Activated CD4-positive, alpha-beta memory T cell treated with anti-CD3 and anti-CD28 coated beads for 36 hours (primary cell): ENCODE measurements at regions of chr19 and their contacts with region 1.

Region 1: DNA sequence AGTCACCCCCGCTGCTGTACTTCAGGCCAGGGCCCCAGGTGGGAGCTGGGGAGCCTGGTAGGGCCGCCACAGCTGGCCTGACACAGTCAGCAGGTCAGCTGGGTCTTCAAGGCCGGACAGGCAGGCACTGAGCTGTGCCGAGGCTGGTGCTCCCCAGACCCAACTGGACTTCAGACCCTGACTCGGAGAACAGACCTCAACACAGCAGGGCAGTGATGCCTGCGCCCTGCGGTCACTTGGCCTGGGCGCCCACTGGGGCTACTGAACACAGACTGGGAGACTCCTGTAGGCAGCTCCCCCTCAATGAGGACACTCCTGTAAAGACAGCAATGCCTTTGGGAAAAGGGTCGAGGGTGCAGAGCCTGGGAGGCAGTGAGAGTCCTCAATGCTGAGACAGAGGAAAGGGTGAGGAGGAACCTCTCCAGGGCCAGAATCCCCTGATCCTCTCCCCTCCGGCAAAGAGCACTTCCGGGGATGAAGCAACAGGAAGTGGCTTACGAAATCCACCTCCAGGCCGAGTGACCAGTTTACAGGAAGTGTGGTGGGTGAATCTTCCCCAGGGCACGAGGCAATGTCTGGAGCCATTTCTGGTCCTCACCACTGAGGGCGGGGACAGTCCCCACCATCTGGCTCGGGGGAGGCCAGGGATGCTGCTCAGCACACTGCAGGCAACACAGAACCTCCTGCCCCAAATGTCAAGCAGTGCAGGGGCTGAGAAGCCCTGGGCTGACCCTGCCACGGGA is 40.8 kb upstream of the ISYNA1 start:
- DNase-seq: peak; percentile 92
- H3K4me3 Mint-ChIP-seq: peak overlapping the region; percentile 54
- H3K27ac Mint-ChIP-seq: peak overlapping the region; percentile 96
- H3K4me1 Mint-ChIP-seq: peaks cover 93% of the 10 kb centered on the region
- H3K27me3 Mint-ChIP-seq: no peaks in the 10 kb centered on the region

Region 2: DNA sequence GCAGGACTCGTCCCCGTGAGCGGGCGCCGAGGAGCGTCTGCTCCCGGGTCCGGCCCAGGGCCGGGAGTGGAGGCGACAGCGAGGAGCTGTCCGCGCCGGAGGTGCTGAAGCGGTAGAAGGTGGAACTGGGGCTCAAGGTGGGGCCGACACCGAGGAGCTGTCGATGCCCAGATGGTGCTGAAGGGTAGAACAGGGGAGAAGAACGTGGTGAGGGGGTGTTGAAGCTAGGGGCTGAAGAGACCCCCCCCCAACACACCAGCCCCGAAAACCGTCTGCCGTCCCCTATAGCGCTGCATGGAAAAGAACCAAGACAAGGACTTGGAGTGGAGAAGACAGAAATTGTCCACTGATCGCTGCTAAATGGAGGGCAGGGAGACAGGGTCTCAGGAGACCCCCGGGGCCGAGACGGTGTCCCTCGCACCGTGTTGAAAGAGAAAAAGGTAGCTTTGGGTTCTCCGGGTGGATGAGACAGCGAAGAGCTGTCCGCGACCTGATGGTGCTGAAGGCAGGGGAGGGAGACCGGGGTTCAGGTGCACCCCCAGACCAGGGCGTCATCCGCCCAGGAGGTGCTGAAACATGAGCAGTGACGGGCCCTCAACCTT is 245.4 kb before region 1 on chr19:
- CTCF ChIA-PET with region 1: no interaction called
- POLR2A ChIA-PET with region 1: no interaction called
- intact Hi-C with region 1: no loop called
- DNase-seq: peak; percentile 67
- H3K4me3 Mint-ChIP-seq: no peak overlapping the region
- H3K27ac Mint-ChIP-seq: no peak overlapping the region
- H3K4me1 Mint-ChIP-seq: peaks cover 3% of the 10 kb centered on the region
- H3K27me3 Mint-ChIP-seq: peaks cover 56% of the 10 kb centered on the region

Region 3: DNA sequence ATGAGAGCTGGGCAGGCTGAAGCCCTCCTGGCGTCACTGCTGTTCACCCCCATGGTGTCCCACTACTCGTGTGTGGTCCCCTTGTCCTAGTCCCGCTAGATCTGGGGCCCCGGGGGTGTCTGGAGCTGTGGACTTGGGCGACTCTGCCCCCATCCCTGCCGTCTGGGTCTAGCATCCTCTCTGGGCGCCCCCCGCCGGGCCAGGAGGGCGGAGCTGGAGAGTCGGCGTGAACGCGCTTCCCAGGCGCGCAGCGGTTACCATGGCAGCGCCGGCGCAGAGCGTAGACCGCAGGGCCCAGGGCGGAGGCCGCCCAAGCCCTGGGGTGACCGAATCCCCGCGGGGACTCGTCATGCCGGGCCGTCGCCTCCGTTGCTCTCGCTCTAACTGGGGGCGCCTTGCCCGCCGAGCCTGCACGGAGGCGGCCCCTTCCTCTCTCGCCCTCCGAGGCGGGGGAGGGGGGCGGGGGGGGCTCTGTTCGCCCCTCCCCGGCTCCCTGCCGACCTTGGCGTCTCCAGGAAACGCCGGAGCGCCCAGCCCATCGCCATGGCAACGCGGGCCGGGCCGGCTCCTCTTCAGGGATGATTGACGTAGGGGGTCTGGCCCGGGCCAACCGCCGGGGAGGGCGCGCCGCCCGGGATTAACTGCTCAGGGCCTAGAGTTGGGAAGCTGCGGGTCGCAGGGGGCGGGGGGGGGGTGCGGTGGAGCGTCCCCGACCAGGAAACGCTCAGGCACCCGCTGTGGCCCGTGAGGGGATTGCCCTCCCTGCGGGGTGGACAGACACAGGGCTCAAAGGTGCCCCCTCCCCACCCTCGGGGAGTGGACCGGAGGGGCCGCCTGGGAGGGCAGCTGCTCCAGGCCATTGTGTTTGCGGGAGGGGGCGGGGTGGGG is 49.7 kb before region 1 on chr19:
- CTCF ChIA-PET with region 1: no interaction called
- POLR2A ChIA-PET with region 1: no interaction called
- intact Hi-C with region 1: no loop called
- DNase-seq: peak; percentile 87
- H3K4me3 Mint-ChIP-seq: no peak overlapping the region
- H3K27ac Mint-ChIP-seq: no peak overlapping the region
- H3K4me1 Mint-ChIP-seq: peaks cover 31% of the 10 kb centered on the region
- H3K27me3 Mint-ChIP-seq: no peaks in the 10 kb centered on the region

Region 4: GRCh38 chr19:18496167-18496979 is 17.6 kb after region 1 on chr19:
- CTCF ChIA-PET with region 1: interaction called, 8 read pairs
- POLR2A ChIA-PET with region 1: interaction called, 7 read pairs
- intact Hi-C with region 1: loop called (anchors 1 kb)
- DNase-seq: peak; percentile 85
- H3K4me3 Mint-ChIP-seq: peak overlapping the region; percentile 36
- H3K27ac Mint-ChIP-seq: peak overlapping the region; percentile 90
- H3K4me1 Mint-ChIP-seq: peaks cover 80% of the 10 kb centered on the region
- H3K27me3 Mint-ChIP-seq: no peaks in the 10 kb centered on the region

Region 5: GRCh38 chr19:18571564-18572300 is 93.0 kb after region 1 on chr19 and contains the start of gene UBA52:
- CTCF ChIA-PET with region 1: interaction called, 4 read pairs
- POLR2A ChIA-PET with region 1: no interaction called
- intact Hi-C with region 1: loop called (anchors 2 kb)
- DNase-seq: peak; percentile 99
- H3K4me3 Mint-ChIP-seq: peak within 1 kb of the TSS; percentile 91
- H3K27ac Mint-ChIP-seq: peak within 1 kb of the TSS; percentile 92
- H3K4me1 Mint-ChIP-seq: peaks cover 23% of the 10 kb centered on the region
- H3K27me3 Mint-ChIP-seq: no peaks in the 10 kb centered on the region
- total RNA-seq, gene UBA52: 1,569 to 1,601 TPM